ENCODE measurements at regions of chr4 and their contacts with region 1.

Region 1: DNA sequence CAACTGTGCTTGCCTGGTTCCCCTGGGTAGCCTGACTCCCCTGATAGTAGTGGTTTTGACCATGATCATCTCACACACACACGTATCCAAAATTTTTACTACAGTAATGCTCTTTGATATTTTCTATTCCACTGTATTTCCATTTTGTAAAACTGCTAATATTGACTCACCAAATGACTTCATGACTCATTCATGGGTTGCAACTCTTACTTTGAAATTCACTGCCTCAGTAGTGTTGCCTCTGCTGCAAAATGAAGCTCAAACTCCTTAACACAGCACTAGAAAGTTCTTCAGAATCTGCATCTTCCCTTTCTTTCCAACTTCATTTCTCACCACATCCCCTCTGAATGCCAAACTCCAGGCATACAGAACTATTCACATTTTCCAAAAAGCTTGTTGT is 20.3 kb downstream of the QRFPR start:
- DNase-seq: no peak
- H3K4me3 ChIP-seq: no peak overlapping the region
- H3K27ac ChIP-seq: no peak overlapping the region
- H3K4me1 ChIP-seq: no peaks in the 10 kb centered on the region
- H3K27me3 ChIP-seq: no peaks in the 10 kb centered on the region
- CTCF ChIP-seq: no peak
- EP300 ChIP-seq: no peak
- POLR2A ChIP-seq: no peak

Region 2: DNA sequence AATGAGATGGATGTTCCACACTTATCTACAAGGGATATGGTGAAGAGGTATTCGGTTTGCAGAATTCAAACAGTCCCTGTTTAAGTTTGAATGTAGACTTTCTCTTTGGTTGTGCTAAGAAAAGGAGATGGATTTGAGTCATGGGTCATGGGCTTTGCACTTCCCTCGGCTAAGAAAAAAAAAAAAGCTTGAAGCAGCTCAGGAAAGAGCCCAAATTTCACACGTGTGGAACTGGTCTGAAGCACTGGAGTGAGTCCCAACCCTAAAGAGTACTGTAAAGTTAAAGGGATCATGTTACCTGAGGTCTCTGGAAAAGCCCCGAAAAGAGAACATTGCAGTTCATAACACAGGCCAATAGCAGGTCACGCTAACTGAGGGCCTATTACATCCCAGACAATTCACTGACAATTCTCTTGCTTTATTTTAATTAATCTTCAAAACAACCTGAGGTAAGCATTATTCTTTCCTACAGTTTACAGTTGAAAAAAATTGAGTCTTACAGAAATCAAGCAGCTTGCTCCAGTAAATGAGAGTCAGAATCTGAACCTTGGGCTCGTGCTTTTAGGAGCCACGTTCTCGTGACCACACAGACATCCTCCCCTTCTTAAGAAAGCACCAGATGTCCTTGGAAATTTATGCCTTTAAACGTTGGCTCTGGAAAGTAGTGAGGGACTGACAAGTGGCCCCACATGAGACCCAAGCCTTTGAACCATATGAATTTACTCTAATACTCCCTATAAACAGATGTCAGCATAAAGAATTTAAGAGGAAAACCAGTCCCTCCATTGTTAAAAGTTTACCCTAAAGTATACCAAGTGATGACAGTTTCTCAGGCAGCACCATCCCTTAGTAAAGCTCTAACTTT is 1383.2 kb before region 1 on chr4:
- intact Hi-C with region 1: no loop called
- DNase-seq: no peak
- H3K4me3 ChIP-seq: no peak overlapping the region
- H3K27ac ChIP-seq: no peak overlapping the region
- H3K4me1 ChIP-seq: no peaks in the 10 kb centered on the region
- H3K27me3 ChIP-seq: no peaks in the 10 kb centered on the region
- CTCF ChIP-seq: no peak
- EP300 ChIP-seq: no peak
- POLR2A ChIP-seq: no peak

Region 3: GRCh38 chr4:121758925-121759568 is 398.6 kb after region 1 on chr4:
- intact Hi-C with region 1: loop called in 1 of 4 experiments (anchors 10 kb)
- DNase-seq: no peak
- H3K4me3 ChIP-seq: no peak overlapping the region
- H3K27ac ChIP-seq: no peak overlapping the region
- H3K4me1 ChIP-seq: no peaks in the 10 kb centered on the region
- H3K27me3 ChIP-seq: no peaks in the 10 kb centered on the region
- CTCF ChIP-seq: no peak
- EP300 ChIP-seq: no peak
- POLR2A ChIP-seq: no peak

Measured in ovary (tissue), 10 donors.